ACHN (cell line): ENCODE measurements at regions of chr7 and their contacts with region 1.

Region 1: GRCh38 chr7:85890244-85890811 is 703.5 kb upstream of the SEMA3D start:
- DNase-seq: peak; percentile 62

Region 2: DNA sequence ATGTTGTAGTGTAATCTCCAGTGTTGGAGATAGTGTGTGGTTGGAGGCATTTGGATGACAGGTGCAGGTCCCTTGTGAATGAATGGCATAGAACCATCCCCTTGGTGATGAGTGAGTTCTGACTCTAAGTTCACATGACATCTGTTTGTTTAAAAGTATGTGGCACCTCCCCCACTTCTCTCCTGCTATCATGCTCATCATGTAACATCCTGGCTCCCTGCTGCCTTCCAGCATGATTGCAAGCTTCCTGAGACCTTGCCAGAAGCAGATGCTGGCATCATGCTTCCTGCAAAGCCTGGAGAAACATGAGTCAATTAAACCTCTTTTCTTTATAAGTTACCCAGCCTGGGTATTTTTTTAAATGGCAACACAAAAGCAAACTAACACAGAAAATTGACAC is 204.4 kb before region 1 on chr7:
- in situ Hi-C with region 1: no loop called
- DNase-seq: no peak

Region 3: DNA sequence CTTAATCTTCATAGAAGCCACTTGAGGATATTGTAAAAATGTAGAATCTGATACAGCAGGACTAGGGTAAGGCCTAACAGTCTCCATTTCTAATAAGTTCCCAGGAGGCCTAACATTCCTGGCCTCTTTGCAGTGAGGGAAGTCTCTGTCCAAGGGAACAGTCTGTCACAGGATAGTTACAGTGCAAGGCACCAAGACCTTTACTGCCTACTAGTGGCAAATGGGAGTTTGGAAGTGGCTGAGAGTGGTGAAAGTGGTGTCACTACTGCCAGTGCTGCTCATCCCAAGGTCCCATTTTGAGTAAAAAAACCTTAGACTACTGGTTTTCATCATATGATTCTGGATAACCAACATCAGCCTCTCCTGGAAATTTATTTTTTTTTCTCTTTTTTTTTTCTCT is 84.0 kb before region 1 on chr7:
- in situ Hi-C with region 1: no loop called
- DNase-seq: peak; percentile 19

Region 4: DNA sequence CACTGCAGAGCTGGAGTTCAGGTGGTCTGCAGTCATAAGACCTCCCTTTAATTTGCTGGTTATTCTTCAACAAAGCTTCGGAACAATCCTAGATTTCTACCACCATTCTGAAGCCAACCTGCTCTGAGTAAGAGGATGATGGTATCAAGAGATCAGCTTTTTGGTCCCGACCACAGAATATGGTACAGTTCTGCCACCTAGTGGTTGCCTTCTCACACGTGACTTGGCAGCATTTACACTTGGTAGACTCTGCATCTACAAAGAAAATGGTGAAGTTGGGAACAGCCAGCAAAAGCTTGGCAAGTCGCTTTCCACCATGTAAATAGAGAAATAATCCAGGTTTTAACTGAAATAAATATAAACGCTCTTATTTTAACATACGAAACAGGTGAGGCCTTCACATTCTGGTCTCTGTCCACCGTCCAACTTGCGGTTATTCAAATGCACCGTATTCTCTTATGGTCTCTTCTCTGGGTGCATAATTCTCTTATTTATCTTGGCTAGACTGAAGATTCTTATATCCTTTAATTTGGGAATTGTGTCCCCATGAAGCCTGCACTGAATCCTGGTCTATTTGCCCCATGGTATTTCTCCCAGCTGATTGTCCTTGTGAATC is 579.5 kb after region 1 on chr7:
- in situ Hi-C with region 1: loop called (anchors 25 kb)
- DNase-seq: peak; percentile 88